ENCODE measurements at regions of chr3 and their contacts with region 1.

Region 1: DNA sequence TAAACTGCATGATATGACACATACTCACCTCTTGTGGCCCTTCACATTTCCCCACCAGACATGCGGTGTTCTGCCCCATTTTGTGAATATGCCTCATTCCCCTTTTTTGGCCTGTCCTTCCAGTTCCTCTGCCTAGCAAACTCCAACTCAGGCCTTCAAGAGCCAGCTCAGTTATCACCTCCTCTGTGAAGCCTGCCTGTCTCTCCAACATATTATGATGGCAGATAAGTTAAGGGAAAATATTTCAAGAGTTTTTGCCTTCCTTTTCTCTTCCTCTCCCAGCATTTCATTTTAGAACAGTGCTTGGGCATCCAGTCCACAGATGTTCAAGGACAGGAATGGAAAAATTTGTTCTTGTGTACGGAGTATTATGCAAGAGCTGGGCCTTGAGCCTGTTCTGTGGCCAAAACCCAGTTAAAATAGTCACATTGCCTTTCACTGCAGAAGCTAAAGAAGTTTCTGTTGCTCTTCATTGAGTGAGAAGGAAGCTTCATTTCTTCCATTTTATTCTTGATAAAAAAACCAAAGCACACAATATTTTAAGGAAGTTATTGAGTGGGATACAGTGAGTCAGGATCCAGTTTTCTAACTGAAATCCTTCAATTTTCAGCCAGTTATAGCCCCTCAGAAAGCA is 192.0 kb downstream of the GHSR start:
- DNase-seq: peak; percentile 77 to 78
- H3K4me3 ChIP-seq: no peak overlapping the region
- H3K27ac ChIP-seq: peak overlapping the region; percentile 69 to 81
- H3K4me1 ChIP-seq: peaks cover 0 to 76% (median 60%) of the 10 kb centered on the region in 4 donors
- H3K27me3 ChIP-seq: no peaks in the 10 kb centered on the region
- CTCF ChIP-seq: no peak

Region 2: DNA sequence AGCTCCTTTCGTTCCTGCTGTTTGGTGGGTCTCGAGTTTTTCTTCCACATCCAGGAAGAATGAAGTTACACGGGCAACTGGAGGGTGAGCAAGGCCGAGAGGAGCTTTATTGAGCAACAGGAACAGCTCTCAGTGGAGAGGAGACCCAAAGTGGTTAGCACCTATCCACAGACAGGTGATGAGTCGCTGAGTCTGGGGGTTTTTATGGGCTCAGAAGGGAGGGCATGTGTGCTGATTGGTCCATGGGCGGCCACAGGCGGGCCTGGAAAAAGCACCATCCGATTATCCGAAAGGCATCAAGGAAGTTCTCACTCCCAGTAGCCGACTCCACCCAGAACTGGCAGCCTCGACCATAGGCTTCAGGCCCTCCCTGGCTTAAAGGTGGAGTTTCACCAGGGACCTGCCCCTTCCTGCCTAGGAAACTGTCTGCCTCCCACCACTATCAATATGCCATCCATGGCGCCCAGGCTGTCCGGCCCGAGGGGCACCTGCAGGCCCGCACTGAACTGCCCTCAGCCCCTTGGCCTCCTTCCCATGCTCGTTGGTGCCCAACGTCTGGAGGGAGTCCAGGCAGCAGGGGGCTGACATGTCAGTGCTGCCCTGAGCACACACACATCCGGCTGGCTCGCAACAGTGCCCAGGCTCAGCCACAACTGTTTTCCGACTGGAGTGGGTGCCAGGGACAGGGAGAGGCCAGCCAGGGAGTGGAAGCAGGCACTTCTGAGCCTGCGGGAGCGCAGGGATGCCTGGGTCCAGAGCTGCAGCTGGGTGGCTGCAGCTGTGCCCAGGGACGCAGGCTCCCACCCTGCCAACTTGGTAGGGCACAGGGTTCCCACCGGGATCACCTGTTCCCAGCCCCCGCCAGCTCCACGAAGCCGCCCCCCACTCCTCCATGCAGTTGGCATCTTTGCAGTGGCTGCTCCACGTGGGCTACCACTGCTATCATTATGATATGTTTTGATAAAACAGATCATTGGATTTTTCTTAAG is 46.6 kb before region 1 on chr3:
- intact Hi-C with region 1: loop called (anchors 5 kb)
- DNase-seq: peak; percentile 58 to 91
- H3K4me3 ChIP-seq: peak overlapping the region; percentile 19 to 24
- H3K27ac ChIP-seq: peak overlapping the region; percentile 57 to 76
- H3K4me1 ChIP-seq: peaks cover 0 to 73% (median 40%) of the 10 kb centered on the region in 4 donors
- H3K27me3 ChIP-seq: no peaks in the 10 kb centered on the region
- CTCF ChIP-seq: no peak